Prostate gland (tissue), 2 donors: ENCODE measurements at regions of chr9 and their contacts with region 1.

Region 1: DNA sequence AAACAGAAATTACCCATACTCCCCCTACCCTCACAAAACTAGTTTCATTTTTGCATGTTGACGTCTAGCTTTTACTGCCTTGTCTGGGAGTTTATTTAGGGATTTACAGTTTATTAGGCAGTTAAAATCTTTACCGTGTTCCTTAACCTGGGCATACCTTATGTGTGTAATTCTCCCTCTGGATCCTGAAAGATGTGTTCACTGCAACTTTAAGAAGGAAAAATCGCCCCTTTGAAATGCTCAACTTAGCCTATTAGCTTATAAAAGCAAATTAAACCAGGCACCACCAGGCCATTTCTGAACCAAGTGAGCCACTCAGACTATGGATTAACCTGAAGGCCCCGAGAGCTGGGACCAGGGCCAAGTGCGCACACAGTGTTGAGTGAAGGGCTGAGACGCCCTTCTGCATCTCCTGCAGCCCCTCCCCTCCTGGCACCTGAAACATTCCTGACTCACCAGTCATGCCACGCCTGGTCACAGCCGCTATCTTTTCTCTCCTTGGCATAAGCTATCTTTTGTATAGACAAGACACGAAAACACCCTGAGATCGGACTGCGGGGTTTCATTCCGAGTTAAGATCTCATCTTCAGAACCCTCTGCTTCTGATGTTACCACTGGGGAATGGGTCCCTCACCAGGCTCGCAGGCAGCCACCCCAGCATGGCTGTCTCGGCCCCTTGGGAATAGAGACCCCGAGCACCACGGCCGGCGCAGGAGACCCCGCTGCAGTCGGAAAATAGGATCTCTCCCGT is 111.9 kb downstream of the ROR2 start:
- DNase-seq: peak; percentile 90
- H3K4me3 ChIP-seq: peak overlapping the region; percentile 17 to 36
- H3K27ac ChIP-seq: peak overlapping the region; percentile 92 to 93
- H3K4me1 ChIP-seq: peaks cover 20% of the 10 kb centered on the region
- H3K27me3 ChIP-seq: no peaks in the 10 kb centered on the region
- CTCF ChIP-seq: peak in 1 of 4 experiments; percentile 9
- POLR2A ChIP-seq: no peak

Region 2: GRCh38 chr9:91775011-91775707 is 63.0 kb before region 1 on chr9:
- intact Hi-C with region 1: loop called (anchors 5 kb)
- DNase-seq: peak; percentile 66
- H3K4me3 ChIP-seq: no peak overlapping the region
- H3K27ac ChIP-seq: no peak overlapping the region
- H3K4me1 ChIP-seq: peaks cover 6% of the 10 kb centered on the region
- H3K27me3 ChIP-seq: no peaks in the 10 kb centered on the region
- CTCF ChIP-seq: peak; percentile 68 to 90 (median 87)
- POLR2A ChIP-seq: no peak

Region 3: DNA sequence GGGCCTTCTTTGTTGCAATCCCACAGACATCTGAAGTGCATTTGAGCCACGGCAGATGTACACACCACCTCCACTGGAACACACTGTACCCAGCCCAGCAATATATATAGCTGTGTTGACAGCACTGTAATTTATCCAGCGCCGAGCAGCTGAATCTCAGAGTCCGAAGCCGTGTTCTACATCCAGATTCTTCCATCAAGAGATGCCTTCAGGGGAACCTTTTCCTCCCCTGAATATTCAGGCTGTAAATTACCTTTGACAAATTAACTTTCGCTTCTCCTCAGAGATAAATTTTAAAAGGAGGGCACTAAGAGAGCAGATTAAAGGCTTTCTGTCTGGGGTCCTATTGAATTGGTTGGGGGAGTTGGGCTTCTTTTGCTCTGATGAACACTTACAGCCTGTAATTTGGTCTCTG is 35.5 kb after region 1 on chr9:
- intact Hi-C with region 1: loop called (anchors 5 kb)
- DNase-seq: peak; percentile 70
- H3K4me3 ChIP-seq: no peak overlapping the region
- H3K27ac ChIP-seq: peak overlapping the region; percentile 58 to 69
- H3K4me1 ChIP-seq: peaks cover 5% of the 10 kb centered on the region
- H3K27me3 ChIP-seq: no peaks in the 10 kb centered on the region
- CTCF ChIP-seq: no peak
- POLR2A ChIP-seq: no peak